ENCODE measurements at regions of chr20 and their contacts with region 1.

Region 1: GRCh38 chr20:23637282-23638221 is at the start of gene CST3:
- DNase-seq: peak; percentile 94
- ATAC-seq: peak; percentile 77 to 94 (median 90)
- H3K4me3 ChIP-seq: peak within 1 kb of the TSS; percentile 73 to 100 (median 93)
- H3K27ac ChIP-seq: peak within 1 kb of the TSS; percentile 92 to 100 (median 98)
- H3K4me1 ChIP-seq: peaks cover 5 to 61% (median 40%) of the 10 kb centered on the region in 9 donors
- H3K27me3 ChIP-seq: no peaks in the 10 kb centered on the region
- CTCF ChIP-seq: peak in 2 of 9 donors; percentile 6 to 8
- total RNA-seq, gene CST3: 395 to 1,066 (median 576) TPM

Region 2: DNA sequence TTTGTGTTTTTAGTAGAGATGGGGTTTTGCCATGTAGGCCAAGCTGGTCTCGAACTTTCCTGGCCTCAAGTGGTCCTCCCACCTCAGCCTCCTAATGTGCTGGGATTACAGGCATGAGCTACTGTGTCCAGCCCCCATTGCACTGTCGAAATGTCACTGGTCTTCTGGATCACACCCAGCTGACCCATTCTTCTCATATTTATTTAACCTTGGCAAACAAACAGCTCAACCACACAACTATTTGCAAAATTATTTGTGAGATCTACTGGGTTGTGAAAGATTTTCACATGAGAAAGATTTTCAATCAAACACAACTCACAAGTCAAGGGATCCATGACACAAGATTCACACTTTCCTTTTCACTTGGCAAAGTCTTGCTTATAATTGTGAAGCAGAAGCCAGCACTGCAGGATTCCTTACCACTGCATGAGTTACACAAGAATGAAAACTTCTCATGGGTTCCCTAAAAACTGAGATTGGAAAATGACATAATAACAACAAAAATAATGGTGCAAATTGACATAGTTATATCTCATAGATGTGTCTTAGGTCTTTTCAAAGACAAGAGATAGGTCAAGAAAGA is 67.3 kb before region 1 on chr20:
- intact Hi-C with region 1: loop called in 1 of 10 experiments (anchors 10 kb)
- DNase-seq: no peak
- ATAC-seq: no peak
- H3K4me3 ChIP-seq: no peak overlapping the region
- H3K27ac ChIP-seq: no peak overlapping the region
- H3K4me1 ChIP-seq: no peaks in the 10 kb centered on the region
- H3K27me3 ChIP-seq: peaks cover 0 to 15% (median 0%) of the 10 kb centered on the region in 7 donors
- CTCF ChIP-seq: no peak

Region 3: GRCh38 chr20:23721962-23722361 is 84.4 kb after region 1 on chr20:
- intact Hi-C with region 1: no loop called
- DNase-seq: peak in 1 of 2 donors; percentile 13
- ATAC-seq: peak in 2 of 8 donors; percentile 57 to 70
- H3K4me3 ChIP-seq: no peak overlapping the region
- H3K27ac ChIP-seq: no peak overlapping the region
- H3K4me1 ChIP-seq: peaks cover 0 to 5% (median 0%) of the 10 kb centered on the region in 9 donors
- H3K27me3 ChIP-seq: no peaks in the 10 kb centered on the region
- CTCF ChIP-seq: no peak

Region 4: GRCh38 chr20:23832775-23833508 is 195.4 kb after region 1 on chr20:
- intact Hi-C with region 1: no loop called
- DNase-seq: no peak
- ATAC-seq: no peak
- H3K4me3 ChIP-seq: no peak overlapping the region
- H3K27ac ChIP-seq: no peak overlapping the region
- H3K4me1 ChIP-seq: no peaks in the 10 kb centered on the region
- H3K27me3 ChIP-seq: peaks cover 0 to 9% (median 0%) of the 10 kb centered on the region in 7 donors
- CTCF ChIP-seq: no peak

Measured in heart right ventricle (tissue), 16 donors.